ENCODE measurements at regions of chr11 and their contacts with region 1.

Region 1: GRCh38 chr11:34174412-34175041 is 69.1 kb downstream of the NAT10 start:
- DNase-seq: peak; percentile 88
- H3K4me3 Mint-ChIP-seq: no peak overlapping the region
- H3K27ac Mint-ChIP-seq: no peak overlapping the region
- H3K4me1 Mint-ChIP-seq: peaks cover 15% of the 10 kb centered on the region
- H3K27me3 Mint-ChIP-seq: peaks cover 2% of the 10 kb centered on the region

Region 2: DNA sequence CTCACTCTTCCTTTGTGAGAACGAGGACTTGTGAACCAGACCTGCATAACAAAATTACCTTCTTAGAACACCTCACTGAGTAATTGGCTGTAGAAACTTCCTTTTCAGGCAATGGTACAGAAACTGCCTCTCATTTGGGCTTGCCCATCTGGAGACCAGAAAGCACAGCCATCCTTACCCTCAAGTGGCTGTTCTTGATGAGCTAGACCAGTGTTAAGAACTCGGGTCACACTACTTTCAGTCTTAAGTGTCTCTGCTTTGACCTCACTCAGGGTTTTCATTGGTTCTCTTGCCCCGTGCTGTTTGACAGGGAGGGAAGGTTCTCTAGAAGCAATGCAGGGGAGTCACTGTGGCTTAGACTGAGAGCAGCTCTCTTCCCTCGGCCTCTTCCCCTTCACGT is 39.8 kb before region 1 on chr11:
- CTCF ChIA-PET with region 1: interaction called, 13 read pairs
- POLR2A ChIA-PET with region 1: no interaction called
- intact Hi-C with region 1: no loop called
- DNase-seq: peak; percentile 16
- H3K4me3 Mint-ChIP-seq: no peak overlapping the region
- H3K27ac Mint-ChIP-seq: no peak overlapping the region
- H3K4me1 Mint-ChIP-seq: peaks cover 10% of the 10 kb centered on the region
- H3K27me3 Mint-ChIP-seq: no peaks in the 10 kb centered on the region

Region 3: GRCh38 chr11:34158661-34159060 is 15.9 kb before region 1 on chr11:
- CTCF ChIA-PET with region 1: interaction called, 13 read pairs
- POLR2A ChIA-PET with region 1: no interaction called
- intact Hi-C with region 1: no loop called
- DNase-seq: peak; percentile 57
- H3K4me3 Mint-ChIP-seq: no peak overlapping the region
- H3K27ac Mint-ChIP-seq: no peak overlapping the region
- H3K4me1 Mint-ChIP-seq: peaks cover 14% of the 10 kb centered on the region
- H3K27me3 Mint-ChIP-seq: no peaks in the 10 kb centered on the region

Region 4: GRCh38 chr11:34214961-34215805 is 40.7 kb after region 1 on chr11:
- CTCF ChIA-PET with region 1: interaction called, 10 read pairs
- POLR2A ChIA-PET with region 1: interaction called, 3 read pairs
- intact Hi-C with region 1: loop called (anchors 2 kb)
- DNase-seq: peak; percentile 94
- H3K4me3 Mint-ChIP-seq: no peak overlapping the region
- H3K27ac Mint-ChIP-seq: peak overlapping the region; percentile 80
- H3K4me1 Mint-ChIP-seq: peaks cover 21% of the 10 kb centered on the region
- H3K27me3 Mint-ChIP-seq: peaks cover 6% of the 10 kb centered on the region

Region 5: DNA sequence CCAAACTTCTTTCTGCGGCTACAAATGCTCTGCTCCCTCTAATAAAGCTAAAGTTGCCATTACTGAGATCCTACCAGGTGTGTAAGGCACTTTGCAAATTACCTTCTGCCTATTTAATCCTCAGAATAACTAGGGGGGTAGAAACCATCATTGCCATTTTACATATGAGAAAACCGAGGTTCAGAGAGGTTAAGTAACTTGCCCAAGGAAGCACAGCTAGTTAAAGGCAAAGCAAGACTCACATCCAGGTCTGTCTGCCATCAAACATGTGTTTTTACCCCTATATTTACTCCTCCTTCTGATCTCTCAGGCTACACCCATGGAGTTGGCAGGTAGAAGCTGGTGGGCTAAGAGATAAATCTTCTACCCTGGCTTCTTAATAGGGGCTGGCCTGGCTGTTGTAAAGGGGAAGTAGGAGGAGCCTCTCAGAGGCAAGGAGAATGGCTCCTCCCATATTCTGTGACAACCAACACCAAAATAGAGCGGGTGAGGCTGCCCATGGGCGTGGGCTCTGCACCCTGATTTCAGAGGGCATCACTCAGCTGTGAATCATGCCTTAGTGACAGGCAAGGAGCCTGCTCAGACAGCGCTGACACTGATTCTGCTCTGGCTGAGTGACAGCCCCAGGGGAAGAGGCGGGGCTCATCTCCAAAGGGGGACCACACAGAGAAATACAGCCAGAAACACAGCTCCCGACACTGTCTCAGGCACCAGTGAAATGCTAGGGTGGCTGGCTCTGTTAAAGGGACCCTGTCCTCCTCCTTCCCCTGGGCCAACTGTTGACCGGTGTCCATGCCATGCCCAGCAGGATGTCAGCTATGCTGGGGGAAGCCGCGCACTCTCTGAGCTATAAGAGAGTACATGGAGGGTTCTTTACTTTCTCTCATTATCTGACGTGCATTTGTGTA is 76.5 kb after region 1 on chr11:
- CTCF ChIA-PET with region 1: interaction called, 21 read pairs
- POLR2A ChIA-PET with region 1: no interaction called
- intact Hi-C with region 1: loop called (anchors 2 kb)
- DNase-seq: peak; percentile 82
- H3K4me3 Mint-ChIP-seq: peak overlapping the region; percentile 14
- H3K27ac Mint-ChIP-seq: no peak overlapping the region
- H3K4me1 Mint-ChIP-seq: peaks cover 52% of the 10 kb centered on the region
- H3K27me3 Mint-ChIP-seq: peaks cover 18% of the 10 kb centered on the region

Region 6: GRCh38 chr11:34267011-34267410 is 92.5 kb after region 1 on chr11:
- CTCF ChIA-PET with region 1: no interaction called
- POLR2A ChIA-PET with region 1: no interaction called
- intact Hi-C with region 1: no loop called
- DNase-seq: no peak
- H3K4me3 Mint-ChIP-seq: no peak overlapping the region
- H3K27ac Mint-ChIP-seq: no peak overlapping the region
- H3K4me1 Mint-ChIP-seq: peaks cover 2% of the 10 kb centered on the region
- H3K27me3 Mint-ChIP-seq: peaks cover 6% of the 10 kb centered on the region

Region 7: DNA sequence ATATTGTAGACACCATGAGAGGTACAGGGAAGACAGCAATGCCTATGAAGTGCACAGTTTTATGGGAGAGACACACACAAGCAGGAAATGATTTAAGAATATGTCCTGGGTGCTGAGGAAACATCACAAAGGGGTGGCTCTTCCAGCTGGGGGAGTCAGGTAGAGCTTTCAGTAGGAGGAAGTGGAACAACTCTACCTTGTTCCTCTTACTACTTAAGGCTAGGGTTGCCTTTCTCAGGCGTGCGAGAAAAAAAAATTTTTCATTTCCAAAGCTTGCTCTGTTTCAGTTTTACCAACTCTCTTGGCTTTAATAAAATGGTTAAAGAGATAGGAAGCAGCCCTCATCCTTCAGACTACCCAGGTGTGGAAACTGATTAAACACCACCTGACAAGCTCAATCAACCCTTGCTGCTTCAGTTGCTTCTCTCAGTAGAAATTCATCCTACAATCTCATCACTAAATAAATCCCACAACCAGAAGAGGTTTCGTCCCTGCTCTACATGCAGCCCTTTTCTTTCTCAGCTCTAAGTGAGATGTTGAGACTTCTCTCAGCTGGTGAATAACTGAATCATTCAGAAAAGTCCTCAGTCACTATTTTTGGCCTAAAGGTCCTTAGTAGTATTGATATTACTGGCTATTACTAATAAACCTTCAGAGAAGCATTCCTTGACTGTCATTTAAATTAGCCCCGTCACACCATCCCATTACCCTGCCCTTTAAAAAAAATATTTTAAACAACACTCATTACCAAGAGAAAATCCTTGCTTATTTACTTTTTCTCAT is 177.4 kb after region 1 on chr11:
- CTCF ChIA-PET with region 1: interaction called, 167 read pairs
- POLR2A ChIA-PET with region 1: interaction called, 10 read pairs
- intact Hi-C with region 1: no loop called
- DNase-seq: no peak
- H3K4me3 Mint-ChIP-seq: no peak overlapping the region
- H3K27ac Mint-ChIP-seq: no peak overlapping the region
- H3K4me1 Mint-ChIP-seq: peaks cover 20% of the 10 kb centered on the region
- H3K27me3 Mint-ChIP-seq: peaks cover 25% of the 10 kb centered on the region

Region 8: GRCh38 chr11:34468209-34468841 is 293.8 kb after region 1 on chr11:
- CTCF ChIA-PET with region 1: interaction called, 16 read pairs
- POLR2A ChIA-PET with region 1: no interaction called
- intact Hi-C with region 1: loop called (anchors 1 kb)
- DNase-seq: peak; percentile 67
- H3K4me3 Mint-ChIP-seq: no peak overlapping the region
- H3K27ac Mint-ChIP-seq: no peak overlapping the region
- H3K4me1 Mint-ChIP-seq: peaks cover 7% of the 10 kb centered on the region
- H3K27me3 Mint-ChIP-seq: no peaks in the 10 kb centered on the region